CD8-positive, alpha-beta memory T cell (primary cell): ENCODE measurements at regions of chr17 and their contacts with region 1.

Region 1: DNA sequence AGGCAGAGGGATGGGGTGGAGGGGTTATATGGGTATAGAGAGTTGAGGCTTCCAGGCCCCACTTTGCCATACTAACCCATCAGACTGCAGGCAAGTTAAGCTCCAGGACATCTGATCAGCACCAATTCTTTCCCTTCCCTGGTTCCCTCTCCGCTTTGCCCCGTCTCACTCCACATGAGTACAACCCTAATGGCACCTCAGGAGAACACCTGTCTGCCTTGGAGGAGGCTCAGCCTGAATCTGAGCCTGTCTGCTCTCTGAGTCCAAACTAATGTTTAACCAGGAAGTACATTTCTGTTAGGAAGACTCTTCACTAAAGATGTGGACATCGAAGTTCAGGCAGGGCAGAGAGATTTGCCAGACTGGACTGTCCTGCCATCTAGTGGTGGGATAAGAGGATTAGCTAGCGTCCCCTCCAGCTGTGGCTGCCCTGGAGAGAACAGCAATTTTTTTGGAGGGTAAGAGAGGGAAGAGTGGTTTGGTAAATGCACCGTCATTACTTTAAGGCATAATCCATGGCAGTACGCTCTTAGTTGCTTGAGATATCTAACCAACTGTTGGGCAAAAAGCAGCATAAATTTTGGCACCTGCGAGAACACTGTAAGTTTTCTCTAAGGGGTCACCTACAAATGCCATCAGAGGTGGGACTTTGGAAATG is 29.2 kb upstream of the LRRC75A start:
- DNase-seq: peak; percentile 31 to 81 (median 59)
- H3K4me3 ChIP-seq: no peak overlapping the region
- H3K4me3 Mint-ChIP-seq: no peak overlapping the region
- H3K27ac ChIP-seq: no peak overlapping the region
- H3K27ac Mint-ChIP-seq: peak overlapping the region in 1 of 8 donors; percentile 6
- H3K4me1 ChIP-seq: peaks cover 5% of the 10 kb centered on the region
- H3K4me1 Mint-ChIP-seq: peaks cover 0 to 4% (median 2%) of the 10 kb centered on the region in 3 donors
- H3K27me3 ChIP-seq: peaks cover 6% of the 10 kb centered on the region
- H3K27me3 Mint-ChIP-seq: peaks cover 25 to 63% of the 10 kb centered on the region in 2 donors

Region 2: GRCh38 chr17:16438557-16439302 is 82.5 kb before region 1 on chr17:
- CTCF ChIA-PET with region 1: interaction called, 10 read pairs
- POLR2A ChIA-PET with region 1: no interaction called
- DNase-seq: peak; percentile 91 to 97 (median 97)
- H3K4me3 ChIP-seq: peak overlapping the region; percentile 74
- H3K4me3 Mint-ChIP-seq: peak overlapping the region; percentile 96 to 100 (median 99)
- H3K27ac ChIP-seq: peak overlapping the region; percentile 92
- H3K27ac Mint-ChIP-seq: peak overlapping the region; percentile 78 to 100 (median 99)
- H3K4me1 ChIP-seq: peaks cover 35% of the 10 kb centered on the region
- H3K4me1 Mint-ChIP-seq: peaks cover 55 to 61% (median 59%) of the 10 kb centered on the region in 3 donors
- H3K27me3 ChIP-seq: no peaks in the 10 kb centered on the region
- H3K27me3 Mint-ChIP-seq: no peaks in the 10 kb centered on the region

Region 3: GRCh38 chr17:16453493-16453851 is 67.7 kb before region 1 on chr17:
- CTCF ChIA-PET with region 1: interaction called, 56 read pairs
- POLR2A ChIA-PET with region 1: no interaction called
- DNase-seq: no peak
- H3K4me3 ChIP-seq: no peak overlapping the region
- H3K4me3 Mint-ChIP-seq: peak overlapping the region in 1 of 7 donors; percentile 21
- H3K27ac ChIP-seq: no peak overlapping the region
- H3K27ac Mint-ChIP-seq: peak overlapping the region in 5 of 8 donors; percentile 8 to 79 (median 51)
- H3K4me1 ChIP-seq: no peaks in the 10 kb centered on the region
- H3K4me1 Mint-ChIP-seq: peaks cover 6 to 10% (median 7%) of the 10 kb centered on the region in 3 donors
- H3K27me3 ChIP-seq: no peaks in the 10 kb centered on the region
- H3K27me3 Mint-ChIP-seq: no peaks in the 10 kb centered on the region

Region 4: DNA sequence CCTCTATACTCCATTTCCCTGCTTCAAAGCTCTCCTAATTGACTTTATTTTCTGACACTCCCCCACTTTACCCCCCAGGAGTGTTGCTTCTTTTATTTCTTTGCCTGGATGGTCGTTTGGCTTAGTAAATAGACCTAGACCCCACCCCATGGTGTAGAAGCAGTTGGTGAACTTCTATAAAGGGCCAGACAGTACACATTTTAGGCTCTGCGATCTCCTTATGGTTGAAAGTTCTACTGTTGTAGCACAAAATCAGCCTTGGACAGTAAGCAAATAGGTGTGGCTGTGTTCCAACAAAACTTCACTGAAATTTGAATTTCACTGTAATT is 15.9 kb after region 1 on chr17:
- CTCF ChIA-PET with region 1: interaction called, 15 read pairs
- POLR2A ChIA-PET with region 1: interaction called, 3 read pairs
- DNase-seq: no peak
- H3K4me3 ChIP-seq: peak overlapping the region; percentile 86
- H3K4me3 Mint-ChIP-seq: peak overlapping the region; percentile 94 to 99 (median 98)
- H3K27ac ChIP-seq: no peak overlapping the region
- H3K27ac Mint-ChIP-seq: peak overlapping the region in 7 of 8 donors; percentile 15 to 98 (median 80)
- H3K4me1 ChIP-seq: peaks cover 18% of the 10 kb centered on the region
- H3K4me1 Mint-ChIP-seq: peaks cover 17 to 31% (median 19%) of the 10 kb centered on the region in 3 donors
- H3K27me3 ChIP-seq: no peaks in the 10 kb centered on the region
- H3K27me3 Mint-ChIP-seq: peaks cover 0 to 6% of the 10 kb centered on the region in 2 donors